ENCODE measurements at regions of chr6 and their contacts with region 1.

Region 1: DNA sequence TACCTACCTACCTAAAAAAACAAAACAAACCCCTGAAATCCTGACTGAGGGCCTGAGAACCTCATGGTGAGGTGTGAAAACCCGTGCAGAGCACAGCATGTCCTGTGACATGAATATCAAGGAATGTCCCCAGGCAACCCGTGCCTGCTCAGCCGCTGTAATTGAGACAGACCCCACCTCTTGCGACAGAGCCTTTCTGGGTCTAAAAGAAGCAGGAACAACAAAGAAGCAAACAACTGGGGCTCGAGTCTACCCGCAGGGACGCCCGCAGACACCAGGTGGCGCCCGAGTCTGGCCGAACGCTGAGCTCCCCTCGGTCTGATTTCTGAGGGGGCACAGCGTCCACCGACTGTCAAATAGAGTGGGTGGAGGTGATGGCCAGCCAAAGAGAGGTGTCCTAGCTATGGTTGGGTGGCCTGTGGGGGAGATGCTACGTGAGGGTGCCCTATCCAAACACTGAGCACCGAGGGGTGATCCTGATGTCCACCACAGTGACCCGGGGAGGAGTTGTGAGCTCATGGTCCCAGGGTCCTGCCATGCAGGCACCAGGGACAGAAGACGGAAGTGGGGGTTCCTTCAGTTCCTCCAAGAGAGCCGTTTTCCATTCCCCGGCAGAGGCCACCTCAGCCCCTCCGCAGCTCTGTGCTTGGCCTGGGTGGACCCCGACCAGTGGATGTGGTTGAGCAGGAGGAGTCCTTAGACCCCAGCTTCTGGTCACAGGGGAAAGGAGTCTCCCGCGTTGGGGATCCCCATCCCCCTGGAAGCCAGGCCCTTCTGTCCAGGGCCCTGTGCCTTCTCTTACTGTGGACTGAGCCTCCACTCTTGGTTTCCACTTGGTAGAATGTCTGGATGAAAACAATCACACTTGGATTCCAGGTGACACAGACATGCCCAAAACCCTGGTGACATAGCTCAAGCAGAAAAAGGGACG is 268.2 kb downstream of the CDC5L start:
- DNase-seq: peak; percentile 89
- ATAC-seq: peak; percentile 86

Region 2: GRCh38 chr6:45916692-45917091 is 1261.0 kb after region 1 on chr6:
- intact Hi-C with region 1: loop called (anchors 10 kb)
- DNase-seq: no peak
- ATAC-seq: no peak